PC-9 (cell line): ENCODE measurements at regions of chr20 and their contacts with region 1.

Region 1: DNA sequence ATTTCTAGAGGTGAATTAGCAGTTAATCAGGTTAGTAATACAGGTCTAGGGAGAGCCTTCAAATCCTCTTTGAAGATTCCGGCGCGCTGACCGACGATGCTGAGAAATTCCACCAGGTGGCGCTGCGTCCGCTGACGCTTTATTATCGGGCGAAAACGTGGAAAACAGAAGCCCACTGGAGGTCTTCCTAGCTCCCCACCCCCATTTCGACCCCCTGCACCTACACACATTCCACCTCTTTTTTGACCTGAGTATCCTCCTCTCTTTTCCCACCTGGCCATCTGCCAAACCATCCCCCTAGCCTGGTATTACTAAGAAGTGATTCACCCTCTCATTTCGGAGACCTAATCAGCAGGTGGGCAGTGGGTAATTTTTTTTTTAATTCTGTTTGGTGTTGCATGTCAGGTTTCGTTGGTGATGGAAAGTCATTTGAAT is 65.4 kb upstream of the RIN2 start:
- DNase-seq: peak; percentile 70 to 72
- H3K4me3 ChIP-seq: peak overlapping the region; percentile 34; the same call in 1 of the 2 replicates
- H3K27ac ChIP-seq: peak overlapping the region; percentile 45
- H3K4me1 ChIP-seq: peaks cover 10% of the 10 kb centered on the region
- H3K27me3 ChIP-seq: no peaks in the 10 kb centered on the region
- CTCF ChIP-seq: peak; percentile 98

Region 2: DNA sequence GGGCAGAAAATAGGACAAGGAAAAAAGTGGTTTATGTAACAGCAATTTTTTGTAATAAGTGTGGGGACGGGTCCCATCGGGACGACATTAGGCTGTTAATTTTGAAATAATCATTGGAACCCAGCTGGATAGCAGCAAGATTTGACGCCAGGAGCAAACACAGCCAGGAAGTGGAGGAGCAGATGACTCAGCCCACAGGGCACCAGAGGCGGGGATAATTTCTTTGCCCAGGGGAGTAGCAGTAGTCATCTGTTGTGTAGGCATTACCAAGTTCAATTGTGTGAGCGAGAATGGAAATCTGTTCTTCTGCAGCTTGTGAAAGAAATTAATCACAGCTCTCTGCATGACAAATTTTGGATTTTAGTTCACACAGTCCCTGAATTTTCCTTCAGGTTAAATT is 42.7 kb after region 1 on chr20:
- CTCF ChIA-PET with region 1: no interaction called
- POLR2A ChIA-PET with region 1: no interaction called
- intact Hi-C with region 1: loop called (anchors 2 kb)
- DNase-seq: peak; percentile 79 to 90
- H3K4me3 ChIP-seq: no peak overlapping the region
- H3K27ac ChIP-seq: peak overlapping the region; percentile 100
- H3K4me1 ChIP-seq: peaks cover 49% of the 10 kb centered on the region
- H3K27me3 ChIP-seq: no peaks in the 10 kb centered on the region
- CTCF ChIP-seq: no peak